Heart right ventricle (tissue), 16 donors: ENCODE measurements at regions of chr13 and their contacts with region 1.

Region 1: GRCh38 chr13:85828149-85828548 is 28.9 kb upstream of the SLITRK6 start:
- DNase-seq: no peak
- ATAC-seq: no peak
- H3K4me3 ChIP-seq: no peak overlapping the region
- H3K27ac ChIP-seq: no peak overlapping the region
- H3K4me1 ChIP-seq: no peaks in the 10 kb centered on the region
- H3K27me3 ChIP-seq: no peaks in the 10 kb centered on the region
- CTCF ChIP-seq: peak in 8 of 9 donors; percentile 18 to 72 (median 62)

Region 2: GRCh38 chr13:84730376-84730775 is 1097.8 kb before region 1 on chr13:
- intact Hi-C with region 1: loop called in 1 of 10 experiments (anchors 10 kb)
- DNase-seq: no peak
- ATAC-seq: no peak
- H3K4me3 ChIP-seq: no peak overlapping the region
- H3K27ac ChIP-seq: no peak overlapping the region
- H3K4me1 ChIP-seq: no peaks in the 10 kb centered on the region
- H3K27me3 ChIP-seq: no peaks in the 10 kb centered on the region
- CTCF ChIP-seq: no peak

Region 3: DNA sequence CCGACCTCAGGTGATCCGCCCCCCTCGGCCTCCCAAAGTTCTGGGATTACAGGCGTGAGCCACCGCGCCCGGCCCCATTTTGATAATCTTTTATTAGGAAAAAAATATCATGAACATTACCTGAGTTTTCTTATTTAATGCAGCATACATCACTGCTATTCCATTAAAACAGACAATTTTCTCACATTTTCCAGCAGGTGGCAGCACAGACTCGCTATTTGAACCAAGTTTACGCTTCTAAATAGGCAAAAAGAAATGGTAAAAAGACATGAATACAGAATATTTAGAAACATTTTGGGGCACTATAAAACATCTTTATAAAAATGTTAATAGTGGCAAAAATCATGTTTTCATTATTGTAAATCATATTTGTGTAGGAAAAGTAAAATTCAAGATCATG is 932.0 kb before region 1 on chr13:
- intact Hi-C with region 1: loop called in 1 of 10 experiments (anchors 10 kb)
- DNase-seq: no peak
- ATAC-seq: no peak
- H3K4me3 ChIP-seq: no peak overlapping the region
- H3K27ac ChIP-seq: no peak overlapping the region
- H3K4me1 ChIP-seq: no peaks in the 10 kb centered on the region
- H3K27me3 ChIP-seq: no peaks in the 10 kb centered on the region
- CTCF ChIP-seq: peak; percentile 28 to 68 (median 63)